ENCODE measurements at regions of chrX and their contacts with region 1.

Region 1: DNA sequence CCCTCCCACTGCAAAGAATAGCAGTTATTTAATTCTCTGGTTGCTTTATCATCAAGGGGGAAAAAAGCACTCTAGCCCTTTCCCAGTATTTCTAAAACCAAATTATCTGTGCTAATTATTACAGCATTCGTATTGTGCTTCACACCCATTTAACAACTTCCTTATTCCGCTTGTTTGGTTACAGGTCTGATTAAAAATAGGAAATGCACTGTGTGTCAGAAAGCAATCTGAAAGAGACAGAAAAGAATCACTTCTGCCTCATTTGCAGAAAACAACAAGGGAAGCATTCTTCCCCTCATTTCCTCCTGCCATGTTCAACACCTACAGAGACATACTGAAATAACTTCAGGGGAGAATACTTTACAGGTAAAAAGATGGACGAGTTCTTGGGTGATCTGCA is 114.9 kb upstream of the MAP3K15 start:
- DNase-seq: no peak
- ATAC-seq: no peak
- H3K4me3 Mint-ChIP-seq: no peak overlapping the region
- H3K27ac Mint-ChIP-seq: peak overlapping the region; percentile 4
- H3K4me1 Mint-ChIP-seq: peaks cover 28% of the 10 kb centered on the region
- H3K27me3 Mint-ChIP-seq: no peaks in the 10 kb centered on the region
- CTCF ChIP-seq: no peak

Region 2: DNA sequence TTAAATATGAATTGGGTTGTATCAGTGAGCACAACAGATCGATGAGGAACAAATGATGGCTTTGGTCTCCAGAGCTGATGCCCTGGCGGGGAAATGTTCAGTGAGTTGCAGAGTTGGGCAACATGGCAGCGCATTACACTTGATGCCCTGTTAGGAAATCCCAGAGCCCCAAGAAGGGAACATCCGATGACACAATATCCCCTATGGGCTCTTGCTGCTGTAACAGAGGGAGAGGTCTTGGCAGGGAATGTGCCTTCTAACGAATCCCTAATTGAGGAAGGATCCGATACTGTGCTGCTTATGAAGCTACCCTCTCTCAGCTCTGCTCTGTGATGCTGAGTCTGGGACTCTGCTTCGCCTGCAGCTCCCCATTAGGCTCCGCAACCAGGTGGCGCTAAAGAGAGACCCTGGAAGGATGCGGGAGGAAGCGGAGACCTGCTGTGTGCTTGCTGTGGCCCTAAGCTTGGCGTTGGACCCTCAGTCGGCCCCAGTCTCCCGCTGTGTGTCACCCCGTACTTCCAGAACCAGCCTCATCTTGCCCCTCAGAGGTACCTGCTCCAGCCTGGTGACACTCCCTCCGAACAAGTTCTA is 247.6 kb before region 1 on chrX:
- CTCF ChIA-PET with region 1: no interaction called
- POLR2A ChIA-PET with region 1: no interaction called
- intact Hi-C with region 1: no loop called
- DNase-seq: no peak
- ATAC-seq: no peak
- H3K4me3 Mint-ChIP-seq: no peak overlapping the region
- H3K27ac Mint-ChIP-seq: no peak overlapping the region
- H3K4me1 Mint-ChIP-seq: no peaks in the 10 kb centered on the region
- H3K27me3 Mint-ChIP-seq: peaks cover 4% of the 10 kb centered on the region
- CTCF ChIP-seq: no peak

Region 3: GRCh38 chrX:19666950-19667349 is 36.7 kb after region 1 on chrX:
- CTCF ChIA-PET with region 1: no interaction called
- POLR2A ChIA-PET with region 1: no interaction called
- intact Hi-C with region 1: loop called (anchors 5 kb)
- DNase-seq: no peak
- ATAC-seq: no peak
- H3K4me3 Mint-ChIP-seq: no peak overlapping the region
- H3K27ac Mint-ChIP-seq: no peak overlapping the region
- H3K4me1 Mint-ChIP-seq: peaks cover 27% of the 10 kb centered on the region
- H3K27me3 Mint-ChIP-seq: no peaks in the 10 kb centered on the region
- CTCF ChIP-seq: no peak

Region 4: DNA sequence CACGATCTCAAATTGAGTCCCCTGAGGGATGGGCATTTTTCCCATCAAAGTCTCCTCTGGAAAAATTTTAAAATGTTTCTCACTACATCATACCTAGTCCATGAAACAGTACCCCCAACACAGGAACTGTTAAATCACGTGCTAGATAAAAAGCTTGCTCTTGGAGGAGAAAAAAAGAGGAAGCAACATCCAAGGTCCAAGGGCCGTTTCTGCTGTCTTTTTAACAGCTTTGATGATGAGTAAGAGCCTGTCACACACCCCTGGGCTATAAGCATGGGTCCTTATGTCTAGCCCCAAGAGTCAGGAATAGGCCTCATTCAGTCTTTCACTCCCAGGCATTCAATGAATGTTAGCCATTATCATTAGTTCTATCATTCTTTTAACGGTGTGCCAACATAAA is 128.3 kb after region 1 on chrX:
- CTCF ChIA-PET with region 1: no interaction called
- POLR2A ChIA-PET with region 1: no interaction called
- intact Hi-C with region 1: no loop called
- DNase-seq: no peak
- ATAC-seq: peak; percentile 85
- H3K4me3 Mint-ChIP-seq: no peak overlapping the region
- H3K27ac Mint-ChIP-seq: peak overlapping the region; percentile 72
- H3K4me1 Mint-ChIP-seq: peaks cover 77% of the 10 kb centered on the region
- H3K27me3 Mint-ChIP-seq: no peaks in the 10 kb centered on the region
- CTCF ChIP-seq: no peak